ENCODE measurements at regions of chr2 and their contacts with region 1.

Region 1: DNA sequence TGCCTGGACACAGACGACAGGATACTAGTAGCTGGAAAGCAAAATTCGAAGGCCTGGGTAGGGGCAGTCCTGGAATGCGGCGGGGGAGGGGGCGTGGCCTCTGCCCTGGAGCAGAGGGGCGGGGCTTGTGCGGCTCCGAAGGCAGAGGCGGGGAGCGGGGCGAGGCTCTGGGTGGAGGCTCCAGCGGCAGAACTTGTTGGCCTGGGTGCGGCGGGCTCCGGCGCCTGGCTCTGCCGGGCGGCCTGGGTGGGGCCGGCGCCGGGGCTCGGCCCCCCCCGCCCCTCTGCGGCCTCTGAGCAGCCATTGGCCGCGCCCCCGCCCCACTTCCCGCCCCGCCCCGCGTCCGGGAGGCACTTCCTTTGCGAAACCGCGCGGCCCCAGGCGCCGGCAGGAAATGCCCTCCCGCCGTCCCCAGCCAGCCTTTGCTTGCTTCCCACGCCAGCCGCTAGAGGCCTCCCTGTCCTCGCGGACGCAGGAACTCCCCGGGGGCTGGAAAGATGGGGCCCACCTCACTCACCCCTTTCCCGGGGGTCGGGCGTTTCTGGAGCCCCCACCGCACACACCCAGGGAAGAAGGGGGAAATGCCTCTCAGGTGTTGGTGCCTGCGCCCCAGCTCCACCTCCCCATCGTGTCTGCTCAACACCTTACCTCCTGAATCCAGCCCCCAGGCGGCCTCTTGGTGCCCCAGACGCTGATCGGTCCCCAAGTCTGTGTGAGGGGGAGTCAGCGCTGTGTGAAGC is 6.7 kb downstream of the CTDSP1 start:
- DNase-seq: peak; percentile 98
- H3K4me3 ChIP-seq: peak overlapping the region; percentile 51 to 62 (median 56)
- H3K27ac ChIP-seq: peak overlapping the region; percentile 81 to 90 (median 88)
- H3K4me1 ChIP-seq: peaks cover 47 to 64% (median 62%) of the 10 kb centered on the region in 4 donors
- H3K27me3 ChIP-seq: no peaks in the 10 kb centered on the region
- CTCF ChIP-seq: peak; percentile 74 to 87 (median 77)
- EP300 ChIP-seq: no peak
- POLR2A ChIP-seq: no peak

Region 2: DNA sequence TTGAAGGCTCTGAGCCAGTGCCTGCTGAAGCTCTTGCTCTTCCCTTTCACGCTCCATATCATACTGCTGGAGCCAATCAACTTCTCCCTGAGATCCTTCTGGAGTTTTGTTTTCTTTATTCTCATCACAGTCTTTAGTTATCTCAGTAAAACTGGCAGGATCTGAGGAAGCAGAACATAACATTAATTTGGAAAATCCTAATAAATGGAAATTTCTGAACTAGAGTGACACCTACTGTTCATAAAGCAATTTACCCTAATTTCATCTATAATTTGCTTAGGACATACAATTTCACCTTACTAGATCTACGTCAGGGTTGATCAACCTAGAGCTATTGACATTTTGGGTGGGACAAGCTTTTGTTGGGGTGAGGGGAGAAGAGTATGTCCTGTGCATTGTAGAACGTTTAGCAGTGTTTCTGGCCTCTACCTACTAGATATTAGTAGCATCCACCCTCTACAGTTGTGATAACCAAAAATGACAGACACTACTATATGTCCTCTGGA is 59.7 kb after region 1 on chr2:
- intact Hi-C with region 1: loop called (anchors 5 kb)
- DNase-seq: no peak
- H3K4me3 ChIP-seq: no peak overlapping the region
- H3K27ac ChIP-seq: no peak overlapping the region
- H3K4me1 ChIP-seq: peaks cover 0 to 6% (median 2%) of the 10 kb centered on the region in 4 donors
- H3K27me3 ChIP-seq: no peaks in the 10 kb centered on the region
- CTCF ChIP-seq: peak; percentile 48 to 54 (median 51)
- EP300 ChIP-seq: no peak
- POLR2A ChIP-seq: no peak

Region 3: GRCh38 chr2:218659988-218660358 is 253.6 kb after region 1 on chr2:
- intact Hi-C with region 1: loop called (anchors 5 kb)
- DNase-seq: no peak
- H3K4me3 ChIP-seq: peak overlapping the region; percentile 81 to 97 (median 88)
- H3K27ac ChIP-seq: peak overlapping the region; percentile 76 to 83 (median 78)
- H3K4me1 ChIP-seq: peaks cover 22 to 43% (median 28%) of the 10 kb centered on the region in 4 donors
- H3K27me3 ChIP-seq: no peaks in the 10 kb centered on the region
- CTCF ChIP-seq: no peak
- EP300 ChIP-seq: no peak
- POLR2A ChIP-seq: no peak